Activated CD8-positive, alpha-beta T cell treated with anti-CD3 and anti-CD28 coated beads for 36 hours (primary cell): ENCODE measurements at regions of chr10 and their contacts with region 1.

Region 1: GRCh38 chr10:110210674-110211464 is 3.5 kb downstream of the MXI1 start:
- DNase-seq: peak; percentile 95
- ATAC-seq: peak; percentile 71
- H3K4me3 Mint-ChIP-seq: peak overlapping the region; percentile 97
- H3K27ac Mint-ChIP-seq: peak overlapping the region; percentile 96
- H3K4me1 Mint-ChIP-seq: peaks cover 49% of the 10 kb centered on the region
- H3K27me3 Mint-ChIP-seq: peaks cover 15% of the 10 kb centered on the region
- CTCF ChIP-seq: no peak

Region 2: GRCh38 chr10:110162741-110163145 is 48.1 kb before region 1 on chr10:
- CTCF ChIA-PET with region 1: interaction called, 4 read pairs
- POLR2A ChIA-PET with region 1: interaction called, 4 read pairs
- intact Hi-C with region 1: loop called (anchors 5 kb)
- DNase-seq: no peak
- ATAC-seq: no peak
- H3K4me3 Mint-ChIP-seq: no peak overlapping the region
- H3K27ac Mint-ChIP-seq: no peak overlapping the region
- H3K4me1 Mint-ChIP-seq: peaks cover 13% of the 10 kb centered on the region
- H3K27me3 Mint-ChIP-seq: peaks cover 79% of the 10 kb centered on the region
- CTCF ChIP-seq: no peak

Region 3: DNA sequence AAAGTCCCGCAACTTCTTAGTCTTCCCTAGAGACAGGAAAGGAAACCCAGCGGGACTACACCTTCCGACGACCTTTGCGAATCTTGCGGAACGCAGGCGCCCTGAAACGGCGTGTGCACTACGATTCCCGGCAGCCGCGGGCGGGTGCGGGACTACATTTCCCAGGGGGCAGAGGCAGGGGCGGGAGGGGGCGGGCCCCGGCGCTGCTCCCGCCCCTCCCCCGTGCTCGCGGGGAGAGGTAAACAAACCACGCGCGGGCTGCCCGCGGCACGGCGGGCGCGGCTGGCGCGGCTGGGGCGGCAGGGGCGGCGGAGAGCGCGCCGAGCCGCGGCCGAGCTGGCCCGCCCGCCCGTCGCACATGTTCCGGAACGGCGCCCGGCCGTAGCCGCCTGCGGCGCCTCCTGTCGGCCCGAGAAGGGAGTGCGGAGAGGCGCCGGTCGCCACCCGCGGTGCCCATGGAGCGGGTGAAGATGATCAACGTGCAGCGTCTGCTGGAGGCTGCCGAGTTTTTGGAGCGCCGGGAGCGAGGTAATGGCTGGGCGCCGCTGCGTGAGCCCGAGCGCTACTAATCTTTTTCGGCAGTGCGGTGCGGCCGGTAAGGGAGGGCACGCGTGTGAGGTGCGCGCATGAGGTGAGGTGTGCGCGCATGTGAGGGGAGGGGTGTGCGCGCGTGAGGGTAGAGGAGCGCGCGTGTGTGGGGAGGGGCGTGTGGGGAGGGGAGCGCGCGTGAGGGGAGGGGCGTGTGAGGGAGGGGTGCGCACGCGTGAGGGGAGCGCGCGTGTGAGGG is 15.1 kb after region 1 on chr10:
- CTCF ChIA-PET with region 1: interaction called, 171 read pairs
- POLR2A ChIA-PET with region 1: interaction called, 42 read pairs
- intact Hi-C with region 1: loop called (anchors 2 kb)
- DNase-seq: peak; percentile 89
- ATAC-seq: peak; percentile 65
- H3K4me3 Mint-ChIP-seq: peak overlapping the region; percentile 94
- H3K27ac Mint-ChIP-seq: peak overlapping the region; percentile 96
- H3K4me1 Mint-ChIP-seq: peaks cover 38% of the 10 kb centered on the region
- H3K27me3 Mint-ChIP-seq: no peaks in the 10 kb centered on the region
- CTCF ChIP-seq: peak; percentile 63

Region 4: GRCh38 chr10:110273474-110273873 is 62.6 kb after region 1 on chr10:
- CTCF ChIA-PET with region 1: interaction called, 57 read pairs
- POLR2A ChIA-PET with region 1: interaction called, 4 read pairs
- intact Hi-C with region 1: no loop called
- DNase-seq: peak; percentile 69
- ATAC-seq: peak; percentile 50
- H3K4me3 Mint-ChIP-seq: no peak overlapping the region
- H3K27ac Mint-ChIP-seq: peak overlapping the region; percentile 66
- H3K4me1 Mint-ChIP-seq: peaks cover 36% of the 10 kb centered on the region
- H3K27me3 Mint-ChIP-seq: no peaks in the 10 kb centered on the region
- CTCF ChIP-seq: no peak